A673 (cell line): ENCODE measurements at regions of chr1 and their contacts with region 1.

Region 1: DNA sequence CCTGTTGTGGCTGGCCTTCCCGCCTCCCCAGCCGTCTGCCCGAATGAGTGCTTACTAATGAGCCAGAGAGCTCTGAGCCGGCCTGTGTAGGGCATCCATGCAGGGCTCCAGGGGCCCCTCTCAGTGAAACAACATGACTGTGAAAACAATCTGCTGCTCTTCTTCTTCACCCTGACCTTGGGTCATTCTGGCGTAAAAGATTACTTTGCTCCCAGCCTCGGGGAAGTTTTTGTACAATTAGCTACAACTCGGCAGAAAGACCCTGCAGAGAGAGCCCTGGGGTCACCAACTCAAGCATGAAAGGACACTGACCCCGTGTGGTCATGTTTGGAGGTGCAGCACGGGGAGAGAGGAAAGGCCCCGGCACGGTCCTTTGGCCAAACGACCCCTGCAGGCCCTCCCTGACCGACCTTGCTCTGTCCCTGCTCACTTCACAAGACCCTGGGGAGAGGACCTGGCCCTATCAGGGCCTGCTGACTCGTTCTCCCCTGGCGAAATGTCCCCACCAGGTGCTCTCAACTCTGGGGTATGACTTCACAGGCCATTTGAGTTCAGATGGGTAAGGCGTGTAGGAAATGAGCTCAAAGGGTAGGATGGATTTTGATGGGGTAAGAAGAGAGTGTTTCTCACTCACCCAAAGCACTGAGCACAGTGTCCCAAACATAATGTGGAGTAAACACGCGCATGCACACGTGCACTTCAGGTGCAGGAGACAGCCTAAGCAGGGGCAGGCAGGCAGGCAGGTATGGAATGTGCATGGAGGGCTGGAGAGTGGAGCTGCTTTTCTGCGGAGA is 22.9 kb upstream of the FAM20B start:
- DNase-seq: peak; percentile 69
- H3K4me3 ChIP-seq: no peak overlapping the region
- H3K27ac ChIP-seq: no peak overlapping the region
- H3K4me1 ChIP-seq: no peaks in the 10 kb centered on the region
- H3K27me3 ChIP-seq: no peaks in the 10 kb centered on the region
- CTCF ChIP-seq: peak; percentile 91

Region 2: DNA sequence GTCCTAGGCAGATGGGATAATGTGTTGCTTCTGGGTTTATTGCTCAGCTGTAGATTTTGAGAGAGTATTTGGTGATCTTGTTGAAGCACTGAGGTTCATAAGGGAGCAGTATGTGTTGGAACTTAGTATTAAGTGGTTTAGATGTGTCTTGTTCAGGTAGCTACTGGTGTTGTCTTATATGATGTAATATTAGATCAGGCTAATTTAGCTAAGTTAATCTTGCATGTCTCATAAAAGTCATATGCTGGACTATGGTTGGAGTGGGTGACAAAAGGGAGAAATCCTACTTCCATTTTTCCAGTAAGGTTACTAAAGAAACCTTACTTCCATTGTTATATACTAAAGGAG is 702.4 kb before region 1 on chr1:
- CTCF ChIA-PET with region 1: no interaction called
- POLR2A ChIA-PET with region 1: no interaction called
- intact Hi-C with region 1: loop called (anchors 5 kb)
- DNase-seq: no peak
- H3K4me3 ChIP-seq: no peak overlapping the region
- H3K27ac ChIP-seq: peak overlapping the region; percentile 52
- H3K4me1 ChIP-seq: peaks cover 10% of the 10 kb centered on the region
- H3K27me3 ChIP-seq: no peaks in the 10 kb centered on the region
- CTCF ChIP-seq: no peak

Region 3: GRCh38 chr1:178768423-178768822 is 234.3 kb before region 1 on chr1:
- CTCF ChIA-PET with region 1: interaction called, 15 read pairs
- POLR2A ChIA-PET with region 1: no interaction called
- intact Hi-C with region 1: no loop called
- DNase-seq: peak; percentile 68
- H3K4me3 ChIP-seq: no peak overlapping the region
- H3K27ac ChIP-seq: no peak overlapping the region
- H3K4me1 ChIP-seq: no peaks in the 10 kb centered on the region
- H3K27me3 ChIP-seq: no peaks in the 10 kb centered on the region
- CTCF ChIP-seq: peak; percentile 96

Region 4: GRCh38 chr1:178774263-178774662 is 228.5 kb before region 1 on chr1:
- CTCF ChIA-PET with region 1: interaction called, 15 read pairs
- POLR2A ChIA-PET with region 1: no interaction called
- intact Hi-C with region 1: loop called (anchors 1 kb)
- DNase-seq: peak; percentile 49
- H3K4me3 ChIP-seq: no peak overlapping the region
- H3K27ac ChIP-seq: no peak overlapping the region
- H3K4me1 ChIP-seq: no peaks in the 10 kb centered on the region
- H3K27me3 ChIP-seq: no peaks in the 10 kb centered on the region
- CTCF ChIP-seq: peak; percentile 64

Region 5: DNA sequence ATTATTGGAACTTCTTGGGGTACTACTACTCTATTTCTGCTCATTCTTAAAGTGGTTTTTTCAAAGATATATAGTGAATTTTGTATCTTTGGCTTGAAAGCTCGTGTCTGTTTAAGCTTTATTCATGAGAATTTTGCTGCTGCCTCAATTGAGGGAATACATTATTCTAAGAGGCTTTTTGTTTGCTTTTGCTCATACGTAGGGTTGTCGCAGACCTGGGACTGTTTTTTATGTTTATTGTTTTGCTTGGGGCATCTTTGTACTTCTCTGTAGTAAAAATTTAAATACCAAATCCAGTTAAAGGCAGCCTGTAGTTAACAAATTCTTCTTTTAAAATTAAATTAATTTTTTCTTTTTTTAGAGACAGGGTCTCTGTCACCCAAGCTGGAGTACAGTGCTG is 194.2 kb before region 1 on chr1:
- CTCF ChIA-PET with region 1: no interaction called
- POLR2A ChIA-PET with region 1: no interaction called
- intact Hi-C with region 1: loop called (anchors 1 kb)
- DNase-seq: no peak
- H3K4me3 ChIP-seq: no peak overlapping the region
- H3K27ac ChIP-seq: no peak overlapping the region
- H3K4me1 ChIP-seq: no peaks in the 10 kb centered on the region
- H3K27me3 ChIP-seq: no peaks in the 10 kb centered on the region
- CTCF ChIP-seq: no peak